ENCODE measurements at regions of chr9 and their contacts with region 1.

Region 1: DNA sequence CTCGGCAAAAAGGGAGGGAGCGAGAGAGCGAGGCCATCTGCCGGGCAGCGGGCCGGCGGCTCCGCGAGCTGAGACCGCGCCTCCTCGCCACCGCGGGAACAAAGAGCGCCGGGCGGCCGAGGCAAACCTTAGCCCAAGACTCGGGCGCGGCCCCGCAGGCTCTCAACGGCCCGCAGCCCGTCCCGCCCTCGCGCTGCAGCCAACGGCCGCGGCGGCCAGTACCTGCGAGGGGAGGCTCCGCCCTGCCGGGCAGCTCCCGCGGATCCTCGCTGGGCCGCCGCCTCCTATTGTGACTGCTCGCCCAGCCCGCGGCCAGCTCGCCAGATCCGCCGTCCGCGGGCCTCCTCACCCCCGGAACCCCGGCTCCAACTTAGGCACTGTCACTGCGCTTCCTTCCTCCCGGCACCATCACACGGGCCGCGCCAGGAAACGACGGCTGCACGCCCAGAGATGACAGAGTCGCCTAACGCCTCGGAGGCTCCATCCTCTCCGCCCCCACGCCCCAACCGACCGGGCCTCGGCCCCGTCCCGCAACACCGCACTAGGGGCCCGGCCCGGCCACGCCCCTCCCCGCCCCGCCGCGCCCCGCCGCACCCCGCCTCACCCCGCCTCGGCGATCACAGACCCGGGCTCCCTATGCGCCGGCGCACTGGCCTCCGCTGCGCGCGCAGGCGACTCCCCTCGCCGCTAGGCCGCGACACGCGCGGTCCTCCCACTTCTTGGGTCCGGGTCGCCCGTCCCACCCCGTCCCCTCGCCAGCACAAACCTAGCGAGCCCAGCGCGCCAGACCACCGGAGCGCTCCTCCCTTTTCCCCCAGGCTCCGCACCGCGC is 479 bp upstream of the RNF38 start:
- DNase-seq: peak; percentile 96

Region 2: DNA sequence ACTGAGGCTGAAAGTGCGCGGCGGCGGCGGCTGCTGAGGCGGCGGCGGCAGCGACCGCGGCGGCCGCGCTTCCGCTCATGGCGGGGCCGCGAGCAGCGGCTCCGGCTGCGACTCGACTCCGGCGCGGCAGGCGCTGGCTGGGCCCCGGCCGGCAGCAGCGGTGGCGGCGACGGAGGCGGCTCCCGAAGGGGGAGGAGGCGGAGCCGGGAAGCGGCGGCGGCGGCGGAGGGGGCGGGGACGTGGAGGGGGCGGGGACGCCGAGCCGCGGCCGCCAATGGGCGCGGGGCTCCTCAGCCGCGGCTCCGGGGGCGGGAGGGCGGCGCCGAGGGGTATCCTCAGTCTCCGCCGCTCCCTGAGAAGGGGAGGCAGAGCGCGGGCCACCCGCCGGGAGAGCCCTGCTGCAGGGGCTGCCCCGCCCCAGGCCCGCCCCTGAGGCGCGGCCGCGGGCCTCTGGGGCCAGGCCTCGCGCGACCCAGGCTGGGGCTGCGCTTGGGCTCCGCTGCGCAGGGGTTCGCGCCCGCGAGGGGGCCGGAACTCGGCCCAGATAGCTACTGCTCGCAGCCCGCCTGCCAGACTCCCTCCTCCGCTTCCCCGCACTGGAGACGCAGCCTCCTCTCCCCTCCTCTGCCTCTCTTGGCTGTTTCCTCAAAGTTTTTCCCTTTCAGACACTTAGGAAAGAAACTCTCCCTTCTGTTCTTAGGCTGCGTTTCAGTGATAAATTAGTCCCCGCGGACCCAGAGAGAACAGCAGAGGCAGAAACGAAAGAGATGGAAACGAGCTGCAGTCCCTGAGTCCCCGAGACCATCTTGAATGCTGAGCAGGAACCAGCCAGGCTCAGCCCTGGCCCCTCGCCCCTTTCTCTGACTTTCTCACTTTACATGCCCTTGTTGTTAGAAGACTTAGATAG is 87.2 kb after region 1 on chr9:
- intact Hi-C with region 1: loop called in 1 of 2 experiments (anchors 10 kb)
- DNase-seq: peak; percentile 97

Measured in posterior vena cava (tissue), 2 donors.